Heart left ventricle (tissue), 16 donors: ENCODE measurements at regions of chr3 and their contacts with region 1.

Region 1: GRCh38 chr3:98817547-98818041 is 54.5 kb downstream of the ST3GAL6 start:
- DNase-seq: no peak
- ATAC-seq: peak; percentile 43 to 78 (median 74)
- H3K4me3 ChIP-seq: no peak overlapping the region
- H3K27ac ChIP-seq: no peak overlapping the region
- H3K4me1 ChIP-seq: peaks cover 0 to 7% (median 2%) of the 10 kb centered on the region in 12 donors
- H3K27me3 ChIP-seq: no peaks in the 10 kb centered on the region
- CTCF ChIP-seq: peak; percentile 78 to 88 (median 80)
- POLR2A ChIP-seq: no peak

Region 2: DNA sequence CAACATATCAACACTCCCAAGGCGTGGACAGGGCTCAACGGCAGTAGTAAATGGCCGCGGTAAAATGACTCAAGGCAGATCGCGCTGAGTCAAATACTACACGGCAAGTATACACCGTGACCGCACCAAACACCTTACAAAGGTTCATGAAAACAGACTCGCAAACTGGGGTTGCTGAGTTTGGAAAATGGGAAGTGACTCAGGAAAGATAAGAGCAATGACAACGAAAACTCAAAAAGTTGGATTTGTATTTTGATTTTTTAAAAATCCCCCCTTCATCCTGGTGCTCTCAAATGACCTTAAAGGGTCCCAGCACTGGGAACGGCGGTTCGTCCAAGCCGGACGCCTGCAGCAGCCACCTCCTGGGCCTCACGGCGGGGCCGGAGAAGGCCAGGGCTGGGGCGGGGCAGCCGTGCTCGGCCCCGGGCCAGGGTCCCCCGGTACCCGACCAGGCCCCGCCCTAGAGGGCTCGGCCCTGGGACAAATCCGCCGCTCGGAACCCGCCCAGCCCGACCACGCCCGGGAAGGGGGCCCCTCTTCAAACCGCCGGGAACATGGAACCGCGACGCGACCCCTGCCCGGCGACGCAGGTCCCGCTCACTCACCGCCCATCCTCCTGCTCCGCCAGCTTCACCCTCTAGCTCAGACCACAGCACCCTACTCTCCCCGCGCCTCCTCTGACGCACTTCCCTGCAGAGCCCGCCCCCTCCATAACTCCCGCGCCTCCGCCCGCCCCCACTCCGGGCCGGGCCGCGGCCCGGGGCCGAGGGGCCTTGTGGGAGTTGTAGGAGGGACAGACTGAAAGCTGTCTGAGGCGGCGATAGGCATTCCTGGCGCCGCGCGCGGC is 295.1 kb before region 1 on chr3 and contains the start of gene CLDND1:
- intact Hi-C with region 1: loop called in 1 of 10 experiments (anchors 10 kb)
- DNase-seq: peak; percentile 98 to 99 (median 98)
- ATAC-seq: peak; percentile 99 to 100 (median 100)
- H3K4me3 ChIP-seq: peak within 1 kb of the TSS; percentile 60 to 94 (median 74)
- H3K27ac ChIP-seq: peak within 1 kb of the TSS; percentile 92 to 98 (median 95)
- H3K4me1 ChIP-seq: peaks cover 0 to 30% (median 20%) of the 10 kb centered on the region in 12 donors
- H3K27me3 ChIP-seq: no peaks in the 10 kb centered on the region
- CTCF ChIP-seq: no peak
- POLR2A ChIP-seq: peak in 1 of 2 donors; percentile 91
- total RNA-seq, gene CLDND1: 64.2 to 155 (median 77.0) TPM

Region 3: DNA sequence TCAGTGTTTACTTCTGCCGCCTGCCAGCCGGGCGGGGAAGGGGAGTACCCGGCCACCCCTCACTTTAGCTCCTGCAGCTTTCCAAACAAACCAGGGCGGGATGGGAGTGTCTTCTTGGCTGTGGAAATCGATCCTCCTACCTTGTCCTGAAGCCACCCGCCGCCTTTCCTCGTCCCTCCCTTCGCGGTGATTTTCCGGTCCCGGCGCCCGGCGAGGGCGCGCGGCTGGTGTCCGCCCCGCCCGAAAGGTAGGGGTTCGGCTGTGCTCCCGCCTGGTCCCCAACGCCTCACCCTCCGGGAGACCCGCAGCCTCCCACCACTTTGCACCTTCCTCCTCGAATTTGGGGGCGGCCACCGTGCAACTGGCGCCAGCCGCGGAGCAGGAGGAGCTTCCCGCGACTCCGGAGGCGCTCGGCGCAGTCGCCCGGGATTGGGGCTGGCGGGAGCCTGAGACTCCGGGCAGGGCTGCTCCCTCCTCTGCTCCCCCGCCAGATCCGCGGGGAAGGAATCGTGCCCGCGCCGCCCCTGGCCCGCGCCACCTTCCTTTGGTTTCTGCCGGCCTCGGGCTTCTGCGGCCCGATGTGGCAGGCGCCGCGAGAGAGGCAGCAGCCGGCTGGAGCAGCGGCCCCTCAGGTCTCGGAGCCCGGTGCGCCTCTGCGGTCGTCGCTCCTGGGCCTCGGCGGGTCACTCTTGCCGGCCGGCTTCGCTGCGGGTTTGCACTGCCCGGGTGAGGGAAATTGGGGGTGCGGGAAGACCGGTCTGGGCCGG is 85.1 kb before region 1 on chr3:
- intact Hi-C with region 1: loop called in 3 of 10 experiments (anchors 5 kb)
- DNase-seq: peak; percentile 69 to 83 (median 72)
- ATAC-seq: peak; percentile 39 to 80 (median 64)
- H3K4me3 ChIP-seq: peak overlapping the region; percentile 66 to 99 (median 90)
- H3K27ac ChIP-seq: peak overlapping the region; percentile 80 to 98 (median 92)
- H3K4me1 ChIP-seq: peaks cover 0 to 40% (median 17%) of the 10 kb centered on the region in 12 donors
- H3K27me3 ChIP-seq: no peaks in the 10 kb centered on the region
- CTCF ChIP-seq: peak in 1 of 12 donors; percentile 3
- POLR2A ChIP-seq: peak in 1 of 2 donors; percentile 65

Region 4: DNA sequence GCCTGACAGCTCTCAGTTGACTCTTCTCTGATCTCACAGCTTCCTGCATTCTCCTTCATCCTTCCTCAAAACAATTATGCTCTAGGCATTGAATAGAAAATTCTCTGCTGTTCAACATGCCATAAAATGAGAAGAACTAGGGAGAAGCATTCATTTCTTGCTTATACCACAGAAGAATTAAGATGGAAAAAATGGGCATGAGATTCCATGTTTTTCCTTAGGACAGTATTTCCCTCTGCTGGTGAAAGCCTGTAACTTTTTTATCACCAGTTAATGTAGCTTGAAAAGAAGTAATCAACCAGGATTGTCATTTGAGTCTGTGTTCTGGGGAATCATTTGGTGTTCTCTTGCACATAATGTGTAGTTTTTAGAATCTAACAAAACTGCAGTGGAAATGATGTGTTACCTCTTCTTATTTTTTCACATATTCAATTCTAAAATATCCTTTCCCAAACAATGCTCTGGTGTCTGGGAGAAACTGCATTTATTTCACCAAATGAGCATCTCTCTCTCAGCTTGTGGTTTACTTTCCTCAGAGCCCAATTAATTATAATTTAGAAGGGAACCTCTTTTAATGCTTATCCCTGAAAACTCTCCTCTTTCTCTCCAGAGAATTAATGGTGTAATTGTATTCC is 176.7 kb after region 1 on chr3:
- intact Hi-C with region 1: loop called (anchors 1 to 2 kb)
- DNase-seq: no peak
- ATAC-seq: peak in 2 of 4 donors; percentile 29 to 48
- H3K4me3 ChIP-seq: no peak overlapping the region
- H3K27ac ChIP-seq: no peak overlapping the region
- H3K4me1 ChIP-seq: no peaks in the 10 kb centered on the region
- H3K27me3 ChIP-seq: no peaks in the 10 kb centered on the region
- CTCF ChIP-seq: peak; percentile 45 to 81 (median 72)
- POLR2A ChIP-seq: no peak

Region 5: GRCh38 chr3:99753268-99753975 is 935.8 kb after region 1 on chr3:
- intact Hi-C with region 1: loop called in 4 of 10 experiments (anchors 5 to 10 kb)
- DNase-seq: peak in 2 of 5 donors; percentile 15 to 27
- ATAC-seq: peak; percentile 69 to 86 (median 77)
- H3K4me3 ChIP-seq: no peak overlapping the region
- H3K27ac ChIP-seq: no peak overlapping the region
- H3K4me1 ChIP-seq: peaks cover 0 to 20% (median 1%) of the 10 kb centered on the region in 12 donors
- H3K27me3 ChIP-seq: no peaks in the 10 kb centered on the region
- CTCF ChIP-seq: peak; percentile 57 to 82 (median 71)
- POLR2A ChIP-seq: no peak